Activated naive CD4-positive, alpha-beta T cell treated with anti-CD3 and anti-CD28 coated beads, Interleukin-2, amount 10 ng/mL, durations not matched to agents 7 days and 5 days (primary cell): ENCODE measurements at regions of chr17 and their contacts with region 1.

Region 1: GRCh38 chr17:34146440-34147043 is 108.5 kb upstream of the CCL2 start:
- DNase-seq: peak; percentile 79
- H3K4me3 Mint-ChIP-seq: no peak overlapping the region
- H3K27ac Mint-ChIP-seq: no peak overlapping the region
- H3K4me1 Mint-ChIP-seq: no peaks in the 10 kb centered on the region
- H3K27me3 Mint-ChIP-seq: peaks cover 4% of the 10 kb centered on the region

Region 2: DNA sequence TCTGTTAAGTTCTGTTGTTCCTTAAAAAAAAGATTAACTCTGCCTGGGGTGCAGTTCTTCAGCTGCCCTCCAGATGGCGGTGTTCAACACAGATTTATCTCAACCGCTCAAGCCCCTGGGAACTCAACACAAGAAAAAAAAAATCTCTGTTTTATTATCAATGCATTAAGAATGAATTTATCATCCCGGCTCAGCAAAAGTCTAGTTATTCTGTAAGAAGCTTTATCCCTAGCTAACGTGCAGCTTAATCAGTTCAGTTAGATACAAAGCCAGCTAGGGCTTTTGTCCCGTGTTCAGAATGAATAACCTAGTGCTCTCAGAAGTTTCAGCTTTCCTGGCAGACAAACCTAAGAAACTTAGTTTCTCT is 367.3 kb before region 1 on chr17:
- CTCF ChIA-PET with region 1: interaction called, 29 read pairs
- DNase-seq: peak; percentile 54
- H3K4me3 Mint-ChIP-seq: no peak overlapping the region
- H3K27ac Mint-ChIP-seq: no peak overlapping the region
- H3K4me1 Mint-ChIP-seq: no peaks in the 10 kb centered on the region
- H3K27me3 Mint-ChIP-seq: no peaks in the 10 kb centered on the region

Region 3: DNA sequence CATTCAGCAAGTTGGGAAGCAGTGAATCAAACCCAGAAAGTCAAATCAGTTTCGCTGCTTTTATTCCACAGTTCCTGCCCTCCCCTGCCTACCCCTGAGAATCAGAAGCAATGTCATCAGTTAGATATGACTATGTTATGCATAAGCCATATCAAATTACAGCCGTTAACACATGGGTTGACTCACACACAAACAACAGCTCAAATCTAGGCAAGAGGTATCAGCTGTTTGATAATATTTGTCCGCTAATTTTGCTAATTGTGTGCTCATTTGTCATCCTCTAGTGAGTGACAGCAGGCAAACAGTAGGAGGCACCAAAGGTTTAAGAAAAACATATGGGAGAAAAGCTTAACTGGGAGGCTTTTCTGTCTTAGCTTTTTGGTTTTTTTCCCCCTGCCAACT is 218.8 kb before region 1 on chr17:
- CTCF ChIA-PET with region 1: interaction called, 30 read pairs
- DNase-seq: no peak
- H3K4me3 Mint-ChIP-seq: no peak overlapping the region
- H3K27ac Mint-ChIP-seq: no peak overlapping the region
- H3K4me1 Mint-ChIP-seq: no peaks in the 10 kb centered on the region
- H3K27me3 Mint-ChIP-seq: peaks cover 16% of the 10 kb centered on the region

Region 4: GRCh38 chr17:34156741-34157589 is 10.4 kb after region 1 on chr17:
- CTCF ChIA-PET with region 1: interaction called, 13 read pairs
- DNase-seq: no peak
- H3K4me3 Mint-ChIP-seq: no peak overlapping the region
- H3K27ac Mint-ChIP-seq: no peak overlapping the region
- H3K4me1 Mint-ChIP-seq: peaks cover 8% of the 10 kb centered on the region
- H3K27me3 Mint-ChIP-seq: peaks cover 57% of the 10 kb centered on the region